Dorsolateral prefrontal cortex (tissue), 120 donors: ENCODE measurements at regions of chr17 and their contacts with region 1.

Region 1: DNA sequence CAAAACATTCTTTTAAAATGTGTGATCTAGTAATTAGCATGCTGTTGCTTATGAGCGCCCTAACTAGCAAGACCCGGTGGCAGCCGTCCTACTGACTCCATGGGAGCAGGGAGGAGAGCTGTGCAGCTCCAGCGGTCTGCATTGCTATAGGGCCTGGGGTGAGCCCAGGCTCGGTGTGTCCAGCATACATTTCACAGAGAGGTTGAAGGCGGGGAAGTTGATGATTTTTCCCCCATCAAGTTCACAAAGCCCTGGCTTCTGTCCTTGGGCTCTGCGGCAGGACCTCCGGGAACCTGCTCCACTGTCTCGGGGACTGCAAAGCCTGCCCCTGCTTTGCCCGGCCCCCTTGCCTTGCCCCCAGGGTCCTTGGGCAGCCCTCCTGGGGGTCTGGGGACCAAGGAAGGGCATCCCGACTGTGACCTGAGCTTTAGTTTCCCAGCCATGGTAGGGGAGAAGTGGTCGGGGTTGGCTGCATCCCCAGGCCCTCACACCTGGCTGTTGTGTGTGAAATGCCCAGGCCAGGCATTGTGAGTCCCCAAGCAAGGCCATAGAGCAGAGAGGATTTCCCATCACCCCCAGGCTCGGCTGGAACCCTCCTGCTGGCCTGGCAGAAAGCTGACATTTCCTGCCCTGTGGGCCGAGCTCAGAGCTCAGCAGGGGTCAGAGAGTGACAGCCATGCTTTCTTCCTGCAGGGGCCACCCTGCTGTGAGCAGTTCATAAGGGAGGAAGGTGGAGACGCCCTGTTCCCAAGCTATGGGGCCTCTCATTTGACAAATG is 24.8 kb downstream of the KCNJ12 start:
- DNase-seq: no peak
- H3K4me3 ChIP-seq: no peak overlapping the region
- H3K27ac ChIP-seq: peak overlapping the region in 1 of 59 donors; percentile 60
- H3K27me3 ChIP-seq: no peaks in the 10 kb centered on the region
- CTCF ChIP-seq: no peak

Region 2: GRCh38 chr17:21689604-21690003 is 288.6 kb after region 1 on chr17:
- intact Hi-C with region 1: loop called (anchors 2 to 10 kb)
- DNase-seq: peak in 3 of 10 donors; percentile 33 to 86 (median 67)
- H3K4me3 ChIP-seq: no peak overlapping the region
- H3K27ac ChIP-seq: no peak overlapping the region
- H3K27me3 ChIP-seq: peaks cover 0 to 7% (median 0%) of the 10 kb centered on the region in 45 donors
- CTCF ChIP-seq: no peak